ENCODE measurements at regions of chr11 and their contacts with region 1.

Region 1: DNA sequence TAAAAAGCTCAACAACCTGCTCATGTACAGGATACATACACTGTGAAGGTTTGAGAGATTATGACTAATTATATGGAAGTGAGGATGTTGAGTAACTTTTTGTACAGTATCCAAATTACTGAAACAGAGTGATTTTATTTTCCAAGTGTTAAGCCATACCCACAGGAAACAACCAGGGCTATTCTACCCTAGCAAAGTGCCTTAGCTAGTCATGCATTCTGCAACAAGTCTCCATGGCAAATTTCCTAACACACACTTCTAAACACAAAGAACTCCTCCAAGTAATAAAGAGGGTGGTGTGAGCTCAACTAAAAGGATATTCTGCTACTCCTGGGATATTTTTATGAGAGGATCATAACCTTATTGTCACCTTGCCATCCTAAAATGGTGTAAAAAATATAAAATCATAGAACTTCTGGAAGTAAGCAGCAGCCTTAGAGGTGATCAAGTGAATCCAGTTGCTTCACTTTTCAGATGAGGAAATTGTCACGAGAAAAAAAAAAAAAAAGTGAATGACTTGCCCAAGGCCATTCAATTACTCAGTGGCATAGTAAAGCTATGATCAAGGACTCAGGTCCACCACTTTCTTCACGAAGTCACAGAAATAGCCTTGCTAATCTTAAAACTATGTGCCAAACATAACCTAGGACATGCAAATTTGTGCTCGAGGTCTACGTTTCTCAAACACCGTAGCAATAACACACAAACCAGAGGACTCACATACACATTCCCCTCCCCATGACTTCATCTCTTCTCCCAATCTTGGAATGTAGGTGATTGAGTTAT is 4.2 kb downstream of the LGR4 start:
- DNase-seq: no peak
- ATAC-seq: peak; percentile 1 to 42
- H3K4me3 ChIP-seq: no peak overlapping the region
- H3K27ac ChIP-seq: no peak overlapping the region
- H3K4me1 ChIP-seq: peaks cover 4% of the 10 kb centered on the region
- H3K27me3 ChIP-seq: no peaks in the 10 kb centered on the region

Region 2: GRCh38 chr11:27392278-27393114 is 75.9 kb before region 1 on chr11:
- intact Hi-C with region 1: loop called in 2 of 4 experiments (anchors 10 kb)
- DNase-seq: no peak
- ATAC-seq: peak; percentile 79 to 81
- H3K4me3 ChIP-seq: no peak overlapping the region
- H3K27ac ChIP-seq: no peak overlapping the region
- H3K4me1 ChIP-seq: peaks cover 9% of the 10 kb centered on the region
- H3K27me3 ChIP-seq: no peaks in the 10 kb centered on the region

Region 3: DNA sequence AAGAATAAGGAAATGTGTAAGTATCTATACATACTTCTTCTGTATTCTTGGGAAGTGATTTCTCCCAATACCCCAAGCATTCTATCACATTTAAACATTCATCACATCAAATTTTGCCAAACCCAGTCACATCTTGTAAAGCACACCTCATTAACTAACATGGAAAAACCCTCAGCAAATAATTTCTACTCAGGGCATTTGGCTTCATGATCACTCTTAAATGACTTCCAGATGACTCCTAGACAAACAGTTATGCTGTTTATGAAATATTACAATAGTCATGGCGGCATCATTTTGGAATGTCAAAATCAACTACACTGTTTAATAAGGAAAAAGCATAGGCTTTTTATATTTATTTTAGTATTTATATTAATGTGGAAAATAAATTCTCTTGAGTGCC is 58.1 kb before region 1 on chr11:
- intact Hi-C with region 1: no loop called
- DNase-seq: no peak
- ATAC-seq: no peak
- H3K4me3 ChIP-seq: no peak overlapping the region
- H3K27ac ChIP-seq: no peak overlapping the region
- H3K4me1 ChIP-seq: peaks cover 1% of the 10 kb centered on the region
- H3K27me3 ChIP-seq: no peaks in the 10 kb centered on the region

Region 4: DNA sequence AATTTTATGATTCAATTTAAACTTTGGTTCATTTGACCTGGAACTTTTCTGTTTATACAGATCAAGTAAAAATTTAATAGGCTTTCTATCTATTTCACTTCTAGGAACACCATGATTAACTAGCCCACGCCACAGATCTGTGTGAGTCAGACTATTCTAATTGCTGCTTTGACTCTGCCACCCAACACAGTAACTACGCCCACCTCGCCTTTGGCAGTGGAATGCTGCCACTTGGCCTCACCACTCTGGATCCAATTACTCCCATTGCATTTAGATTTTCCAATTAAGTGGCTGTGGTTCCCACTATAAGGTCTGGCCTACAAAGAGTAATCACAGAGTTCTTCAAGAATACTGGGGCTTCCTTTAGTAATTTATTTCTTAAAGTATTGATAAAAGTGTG is 84.8 kb after region 1 on chr11:
- intact Hi-C with region 1: no loop called
- DNase-seq: no peak
- ATAC-seq: no peak
- H3K4me3 ChIP-seq: no peak overlapping the region
- H3K27ac ChIP-seq: no peak overlapping the region
- H3K4me1 ChIP-seq: no peaks in the 10 kb centered on the region
- H3K27me3 ChIP-seq: no peaks in the 10 kb centered on the region